Activated B cell treated with CpG ODN at 0.5 μM for 24 hours (primary cell): ENCODE measurements at regions of chr5 and their contacts with region 1.

Region 1: GRCh38 chr5:143370440-143370839 is 33.0 kb downstream of the NR3C1 start:
- DNase-seq: no peak
- ATAC-seq: no peak
- H3K4me3 Mint-ChIP-seq: no peak overlapping the region
- H3K27ac Mint-ChIP-seq: no peak overlapping the region
- H3K4me1 Mint-ChIP-seq: peaks cover 73% of the 10 kb centered on the region
- H3K27me3 Mint-ChIP-seq: no peaks in the 10 kb centered on the region
- CTCF ChIP-seq: no peak

Region 2: DNA sequence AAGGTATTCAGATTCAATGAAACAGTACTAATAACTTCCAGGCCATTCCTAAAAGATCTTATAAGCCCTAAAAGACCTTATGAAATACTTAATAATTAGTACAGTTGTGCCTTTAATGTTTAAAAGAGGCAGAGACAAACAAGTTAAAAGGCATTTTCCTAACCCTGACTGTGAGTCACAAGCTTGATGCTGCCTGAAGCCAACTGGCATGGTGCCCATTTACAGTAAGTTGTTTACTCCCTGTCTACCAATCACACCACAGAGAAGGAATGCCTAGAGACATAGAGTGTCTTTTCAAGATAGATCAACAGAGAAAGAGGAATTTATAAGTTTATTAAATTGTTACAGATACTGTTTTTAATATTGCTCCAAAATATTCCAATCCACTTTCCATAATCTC is 14.7 kb before region 1 on chr5:
- CTCF ChIA-PET with region 1: no interaction called
- POLR2A ChIA-PET with region 1: no interaction called
- intact Hi-C with region 1: loop called (anchors 2 kb)
- DNase-seq: no peak
- ATAC-seq: no peak
- H3K4me3 Mint-ChIP-seq: no peak overlapping the region
- H3K27ac Mint-ChIP-seq: peak overlapping the region; percentile 8
- H3K4me1 Mint-ChIP-seq: peaks cover 81% of the 10 kb centered on the region
- H3K27me3 Mint-ChIP-seq: no peaks in the 10 kb centered on the region
- CTCF ChIP-seq: no peak

Region 3: GRCh38 chr5:143749581-143750205 is 379.3 kb after region 1 on chr5:
- CTCF ChIA-PET with region 1: no interaction called
- POLR2A ChIA-PET with region 1: no interaction called
- intact Hi-C with region 1: no loop called
- DNase-seq: no peak
- ATAC-seq: no peak
- H3K4me3 Mint-ChIP-seq: no peak overlapping the region
- H3K27ac Mint-ChIP-seq: no peak overlapping the region
- H3K4me1 Mint-ChIP-seq: no peaks in the 10 kb centered on the region
- H3K27me3 Mint-ChIP-seq: no peaks in the 10 kb centered on the region
- CTCF ChIP-seq: no peak

Region 4: GRCh38 chr5:144308906-144309670 is 938.6 kb after region 1 on chr5:
- CTCF ChIA-PET with region 1: no interaction called
- POLR2A ChIA-PET with region 1: no interaction called
- intact Hi-C with region 1: no loop called
- DNase-seq: no peak
- ATAC-seq: no peak
- H3K4me3 Mint-ChIP-seq: no peak overlapping the region
- H3K27ac Mint-ChIP-seq: no peak overlapping the region
- H3K4me1 Mint-ChIP-seq: no peaks in the 10 kb centered on the region
- H3K27me3 Mint-ChIP-seq: peaks cover 2% of the 10 kb centered on the region
- CTCF ChIP-seq: no peak